WTC11 (cell line): ENCODE measurements at regions of chr1 and their contacts with region 1.

Region 1: DNA sequence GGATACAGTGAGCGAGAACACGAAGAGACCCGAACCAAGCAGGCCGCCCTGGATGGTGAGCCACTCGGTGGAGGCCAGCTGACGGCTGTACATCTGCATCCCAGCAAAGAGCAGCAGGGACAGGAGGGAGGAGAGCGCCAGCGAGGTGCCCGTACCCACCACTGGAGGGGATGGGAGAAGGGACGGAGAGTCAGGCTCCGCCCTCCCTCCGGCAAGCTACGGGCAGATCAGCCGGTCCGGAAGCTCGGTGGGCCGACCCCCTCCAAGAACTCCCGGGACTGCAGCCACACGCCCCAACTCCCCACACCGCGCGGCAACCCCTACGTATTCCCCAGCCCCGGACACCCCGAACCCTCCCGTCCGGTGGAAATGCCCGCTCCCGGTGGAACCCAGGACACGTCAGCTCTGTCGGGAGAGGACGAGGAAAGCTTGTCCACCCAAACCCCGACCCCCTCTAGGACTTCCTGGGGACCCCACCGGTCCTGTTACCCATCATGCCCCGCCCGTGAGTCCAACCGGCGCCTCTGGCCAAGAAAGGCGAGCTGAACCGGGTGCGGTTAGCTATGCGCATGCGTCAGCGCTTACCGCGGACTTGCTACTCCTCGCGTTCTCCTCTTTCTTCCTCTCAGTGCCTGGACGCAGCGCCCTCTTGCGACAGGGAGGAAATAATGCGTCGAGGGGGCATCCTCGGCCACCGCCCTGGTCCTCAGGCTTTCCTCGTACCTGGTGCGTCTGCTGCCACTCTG is at the start of gene KRTCAP2:
- DNase-seq: peak; percentile 97
- ATAC-seq: peak; percentile 64
- H3K4me3 Mint-ChIP-seq: peak within 1 kb of the TSS; percentile 94
- H3K27ac Mint-ChIP-seq: peak within 1 kb of the TSS; percentile 95
- H3K4me1 Mint-ChIP-seq: peaks cover 29% of the 10 kb centered on the region
- H3K27me3 Mint-ChIP-seq: no peaks in the 10 kb centered on the region
- CTCF ChIP-seq: peak; percentile 88
- total RNA-seq, gene KRTCAP2: 104 to 161 TPM (median 147 TPM) in 3 replicates

Region 2: GRCh38 chr1:155044812-155045690 is 127.9 kb before region 1 on chr1:
- CTCF ChIA-PET with region 1: interaction called, 29 read pairs
- POLR2A ChIA-PET with region 1: no interaction called
- DNase-seq: peak; percentile 77
- ATAC-seq: peak; percentile 92
- H3K4me3 Mint-ChIP-seq: no peak overlapping the region
- H3K27ac Mint-ChIP-seq: no peak overlapping the region
- H3K4me1 Mint-ChIP-seq: peaks cover 35% of the 10 kb centered on the region
- H3K27me3 Mint-ChIP-seq: no peaks in the 10 kb centered on the region; the same call in none of the 2 replicates
- CTCF ChIP-seq: no peak; the same call in 1 of the 2 replicates

Region 3: DNA sequence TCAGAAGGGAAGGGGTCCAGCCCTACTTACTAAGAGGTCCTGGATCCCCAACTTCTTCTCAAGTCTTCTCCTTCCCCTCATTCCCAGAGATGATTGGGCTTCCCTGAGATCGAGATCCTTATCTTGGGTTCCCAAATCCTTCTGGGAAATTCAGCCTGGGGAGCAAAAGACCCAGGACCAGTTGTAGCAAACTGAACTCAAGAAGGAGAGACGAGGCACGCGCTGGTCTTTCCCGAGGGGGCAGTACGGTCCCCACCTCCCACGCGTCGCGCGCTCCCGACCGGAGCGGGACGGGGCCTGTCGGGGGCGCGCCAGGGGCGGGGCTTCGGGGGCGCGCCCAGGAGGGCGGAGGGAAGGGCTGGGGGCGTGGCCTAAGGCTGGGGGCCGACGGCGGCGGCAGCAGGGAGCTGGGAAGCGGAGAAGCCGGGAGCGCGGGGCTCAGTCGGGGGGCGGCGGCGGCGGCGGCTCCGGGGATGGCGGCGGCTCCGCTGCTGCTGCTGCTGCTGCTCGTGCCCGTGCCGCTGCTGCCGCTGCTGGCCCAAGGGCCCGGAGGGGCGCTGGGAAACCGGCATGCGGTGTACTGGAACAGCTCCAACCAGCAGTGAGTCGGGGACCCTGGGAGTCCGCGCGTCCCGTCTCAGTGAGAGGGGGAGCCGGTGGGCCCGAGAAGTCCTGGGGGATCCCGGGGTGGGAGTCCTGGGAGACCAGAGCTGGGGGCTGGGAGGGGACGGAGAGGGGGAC is 94.3 kb before region 1 on chr1 and contains the start of gene EFNA3:
- CTCF ChIA-PET with region 1: interaction called, 25 read pairs
- POLR2A ChIA-PET with region 1: interaction called, 3 read pairs
- DNase-seq: peak; percentile 84
- ATAC-seq: peak; percentile 38
- H3K4me3 Mint-ChIP-seq: peak within 1 kb of the TSS; percentile 76
- H3K27ac Mint-ChIP-seq: no peak within 1 kb of the TSS
- H3K4me1 Mint-ChIP-seq: peaks cover 25% of the 10 kb centered on the region
- H3K27me3 Mint-ChIP-seq: peaks cover 84% of the 10 kb centered on the region
- CTCF ChIP-seq: no peak
- total RNA-seq, gene EFNA3: 12.5 to 15.4 TPM (median 15.4 TPM) in 3 replicates

Region 4: DNA sequence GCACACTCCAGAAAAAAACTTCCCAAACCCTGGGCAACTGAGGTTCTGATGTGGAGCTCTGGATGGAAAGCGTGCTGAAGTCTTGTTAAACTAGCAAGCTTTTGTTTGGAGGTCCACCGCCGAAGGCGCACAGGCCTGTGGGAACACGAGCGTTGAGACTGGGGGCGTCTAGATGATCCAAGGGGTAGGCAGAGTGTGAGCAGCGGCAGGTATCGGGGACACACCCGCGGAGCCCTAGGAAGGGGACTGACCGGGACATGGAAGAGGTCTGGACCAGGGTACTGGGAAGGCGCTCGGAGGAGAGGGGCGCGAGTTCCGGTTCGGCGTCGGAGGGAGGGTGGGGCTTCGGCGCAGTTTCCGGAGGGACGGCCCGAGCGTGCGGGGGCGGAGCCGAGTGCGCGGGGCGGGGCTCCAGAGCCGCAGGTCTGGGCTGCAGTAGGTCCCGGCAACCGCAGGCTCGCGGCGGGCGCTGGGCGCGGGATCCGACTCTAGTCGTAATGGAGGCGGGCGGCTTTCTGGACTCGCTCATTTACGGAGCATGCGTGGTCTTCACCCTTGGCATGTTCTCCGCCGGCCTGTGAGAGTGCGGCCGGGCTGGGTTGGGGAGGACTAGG is 37.4 kb before region 1 on chr1 and contains the start of gene SLC50A1:
- CTCF ChIA-PET with region 1: interaction called, 164 read pairs
- POLR2A ChIA-PET with region 1: interaction called, 9 read pairs
- DNase-seq: peak; percentile 97
- ATAC-seq: peak; percentile 87
- H3K4me3 Mint-ChIP-seq: peak within 1 kb of the TSS; percentile 96
- H3K27ac Mint-ChIP-seq: peak within 1 kb of the TSS; percentile 96
- H3K4me1 Mint-ChIP-seq: peaks cover 21% of the 10 kb centered on the region
- H3K27me3 Mint-ChIP-seq: peaks cover under 1% of the 10 kb centered on the region; the same call in 1 of the 2 replicates
- CTCF ChIP-seq: no peak
- total RNA-seq, gene SLC50A1: 39.0 to 47.8 TPM (median 46.0 TPM) in 3 replicates

Region 5: DNA sequence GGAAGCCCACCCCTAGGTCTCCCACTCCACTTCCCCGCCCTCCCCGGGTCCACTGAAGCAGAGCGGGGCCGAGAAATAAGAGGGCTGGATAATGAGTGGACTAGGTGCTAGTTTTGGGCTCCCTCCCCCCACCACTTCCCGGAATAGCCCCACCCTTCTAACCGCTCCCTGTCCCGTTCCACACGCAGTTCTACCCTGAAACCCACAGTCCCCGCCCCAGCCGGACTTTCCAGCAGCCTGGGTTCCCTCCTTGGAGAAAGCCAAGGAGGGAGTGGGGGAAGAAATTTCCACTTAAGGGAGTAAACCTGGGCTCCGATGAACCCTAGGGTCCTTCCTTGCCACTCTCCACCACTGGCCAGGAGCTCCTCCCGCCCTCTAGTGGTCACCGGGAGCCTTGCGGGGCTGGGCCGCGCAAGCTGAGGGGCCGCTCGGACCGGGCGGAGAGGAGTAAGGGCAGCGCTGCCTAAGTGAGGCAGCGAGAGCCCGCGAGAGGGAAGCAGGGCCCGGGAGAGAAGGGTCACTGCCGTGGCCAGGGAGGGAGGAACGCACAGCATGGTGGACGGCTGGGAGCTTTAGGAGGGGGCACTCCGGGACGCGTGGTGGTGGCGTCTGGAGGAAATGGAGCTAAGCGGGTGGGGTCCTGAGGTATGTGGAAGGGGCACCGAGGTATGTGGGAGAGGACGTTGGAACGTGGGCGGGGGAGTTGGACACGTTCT is 20.5 kb after region 1 on chr1:
- CTCF ChIA-PET with region 1: interaction called, 232 read pairs
- POLR2A ChIA-PET with region 1: interaction called, 83 read pairs
- DNase-seq: peak; percentile 97
- ATAC-seq: peak; percentile 67
- H3K4me3 Mint-ChIP-seq: peak overlapping the region; percentile 99
- H3K27ac Mint-ChIP-seq: peak overlapping the region; percentile 99
- H3K4me1 Mint-ChIP-seq: peaks cover 34% of the 10 kb centered on the region
- H3K27me3 Mint-ChIP-seq: peaks cover 4% of the 10 kb centered on the region; the same call in 1 of the 2 replicates
- CTCF ChIP-seq: peak; percentile 98

Region 6: GRCh38 chr1:155287987-155288543 is 115.2 kb after region 1 on chr1:
- CTCF ChIA-PET with region 1: no interaction called
- POLR2A ChIA-PET with region 1: no interaction called
- DNase-seq: no peak
- ATAC-seq: no peak
- H3K4me3 Mint-ChIP-seq: no peak overlapping the region
- H3K27ac Mint-ChIP-seq: no peak overlapping the region
- H3K4me1 Mint-ChIP-seq: no peaks in the 10 kb centered on the region
- H3K27me3 Mint-ChIP-seq: peaks cover 6% of the 10 kb centered on the region
- CTCF ChIP-seq: no peak